ENCODE measurements at regions of chr7 and their contacts with region 1.

Region 1: DNA sequence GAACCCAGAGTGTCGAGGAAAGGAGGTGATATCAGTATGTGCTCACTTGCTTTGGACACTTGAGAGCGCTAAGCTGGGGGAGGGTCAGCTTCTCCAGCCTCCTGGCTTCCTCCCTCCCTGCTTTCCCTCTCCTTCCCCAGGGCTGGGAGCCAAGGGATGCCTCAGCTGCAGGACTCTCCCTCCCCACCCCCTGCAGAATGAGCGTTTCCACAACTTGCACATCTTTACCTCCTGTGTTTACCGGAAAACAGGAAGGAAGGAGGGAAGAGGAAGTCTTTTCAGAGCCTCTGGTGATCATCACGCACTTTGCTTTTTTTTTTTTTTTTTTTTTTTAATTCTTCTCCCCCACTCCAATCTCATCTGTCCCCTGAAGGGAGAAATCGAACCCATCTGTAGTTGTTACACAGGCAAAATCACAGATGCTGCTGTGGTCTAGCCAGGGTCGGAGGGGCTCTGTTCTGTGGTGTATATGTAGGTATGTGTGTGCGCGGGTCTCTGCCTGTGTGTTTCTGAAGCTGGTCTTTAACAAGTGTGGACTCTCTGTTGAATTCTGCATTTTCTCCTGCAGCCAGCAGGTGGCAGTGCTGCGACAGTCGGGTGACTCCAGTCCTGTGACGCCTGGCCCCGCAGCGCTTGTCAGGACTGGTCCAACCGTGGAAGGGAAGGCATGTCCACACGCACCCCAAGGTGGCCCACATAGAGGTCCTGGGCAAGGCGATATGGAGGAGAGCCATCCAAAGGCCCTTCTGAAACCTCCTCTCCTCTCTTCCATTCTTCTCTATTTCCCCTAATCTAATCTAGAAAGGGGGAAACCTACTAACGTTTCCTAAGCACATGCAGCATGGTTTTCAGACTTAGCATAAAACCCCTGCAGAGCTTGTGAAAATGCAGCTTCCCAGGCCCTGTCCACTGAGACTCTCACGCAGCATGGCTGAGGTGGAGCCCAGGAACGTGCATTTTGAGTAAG is 257.6 kb downstream of the PLXNA4 start:
- DNase-seq: no peak
- H3K4me3 ChIP-seq: no peak overlapping the region
- H3K27ac ChIP-seq: no peak overlapping the region
- H3K4me1 ChIP-seq: peaks cover 7% of the 10 kb centered on the region
- H3K27me3 ChIP-seq: peaks cover 3% of the 10 kb centered on the region
- CTCF ChIP-seq: peak; percentile 89 to 92 (median 90)
- POLR2A ChIP-seq: no peak

Region 2: GRCh38 chr7:132307465-132307864 is 11.2 kb before region 1 on chr7:
- intact Hi-C with region 1: no loop called
- DNase-seq: no peak
- H3K4me3 ChIP-seq: no peak overlapping the region
- H3K27ac ChIP-seq: no peak overlapping the region
- H3K4me1 ChIP-seq: no peaks in the 10 kb centered on the region
- H3K27me3 ChIP-seq: no peaks in the 10 kb centered on the region
- CTCF ChIP-seq: no peak
- POLR2A ChIP-seq: no peak

Region 3: GRCh38 chr7:132402751-132403245 is 84.2 kb after region 1 on chr7:
- intact Hi-C with region 1: no loop called
- DNase-seq: no peak
- H3K4me3 ChIP-seq: no peak overlapping the region
- H3K27ac ChIP-seq: no peak overlapping the region
- H3K4me1 ChIP-seq: peaks cover 15% of the 10 kb centered on the region
- H3K27me3 ChIP-seq: no peaks in the 10 kb centered on the region
- CTCF ChIP-seq: no peak
- POLR2A ChIP-seq: no peak

Region 4: GRCh38 chr7:132455378-132455777 is 136.7 kb after region 1 on chr7:
- intact Hi-C with region 1: no loop called
- DNase-seq: no peak
- H3K4me3 ChIP-seq: no peak overlapping the region
- H3K27ac ChIP-seq: no peak overlapping the region
- H3K4me1 ChIP-seq: no peaks in the 10 kb centered on the region
- H3K27me3 ChIP-seq: no peaks in the 10 kb centered on the region
- CTCF ChIP-seq: no peak
- POLR2A ChIP-seq: no peak

Region 5: DNA sequence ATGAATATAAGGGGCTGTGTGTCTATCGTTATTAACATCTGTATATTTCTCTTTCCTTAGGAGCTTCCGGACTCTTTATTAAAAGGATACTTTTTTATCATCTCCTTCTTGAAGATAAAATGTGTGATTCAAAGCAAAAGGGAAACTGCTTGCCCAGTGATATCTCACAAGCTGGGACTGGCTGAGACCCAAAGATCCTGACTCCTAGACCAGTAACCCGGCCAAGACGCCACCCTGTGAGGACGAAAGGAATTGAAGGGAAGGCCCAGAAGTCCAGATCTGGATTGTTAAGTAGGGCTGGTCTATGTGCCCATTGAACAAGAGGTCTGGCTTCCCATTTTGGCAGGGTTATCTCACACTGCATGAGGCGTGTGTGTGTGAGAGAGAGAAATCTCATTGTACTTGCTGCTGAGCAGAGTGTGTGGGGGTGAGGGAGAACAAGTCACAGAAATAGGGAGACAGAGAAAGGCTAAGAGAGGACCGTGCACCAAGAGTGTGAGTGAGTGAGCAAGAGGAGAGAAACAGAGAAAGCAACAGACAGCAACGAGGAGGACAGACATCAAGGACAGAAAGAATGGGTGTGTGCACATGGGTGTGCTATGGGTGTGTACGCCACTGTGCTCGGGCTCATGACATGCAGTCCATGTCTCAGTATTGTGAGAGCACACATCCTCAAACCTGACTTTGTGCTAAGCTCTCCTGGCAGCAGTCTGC is 182.2 kb after region 1 on chr7:
- intact Hi-C with region 1: loop called (anchors 5 kb)
- DNase-seq: no peak
- H3K4me3 ChIP-seq: no peak overlapping the region
- H3K27ac ChIP-seq: no peak overlapping the region
- H3K4me1 ChIP-seq: no peaks in the 10 kb centered on the region
- H3K27me3 ChIP-seq: no peaks in the 10 kb centered on the region
- CTCF ChIP-seq: peak in 1 of 3 experiments; percentile 33
- POLR2A ChIP-seq: no peak

Region 6: DNA sequence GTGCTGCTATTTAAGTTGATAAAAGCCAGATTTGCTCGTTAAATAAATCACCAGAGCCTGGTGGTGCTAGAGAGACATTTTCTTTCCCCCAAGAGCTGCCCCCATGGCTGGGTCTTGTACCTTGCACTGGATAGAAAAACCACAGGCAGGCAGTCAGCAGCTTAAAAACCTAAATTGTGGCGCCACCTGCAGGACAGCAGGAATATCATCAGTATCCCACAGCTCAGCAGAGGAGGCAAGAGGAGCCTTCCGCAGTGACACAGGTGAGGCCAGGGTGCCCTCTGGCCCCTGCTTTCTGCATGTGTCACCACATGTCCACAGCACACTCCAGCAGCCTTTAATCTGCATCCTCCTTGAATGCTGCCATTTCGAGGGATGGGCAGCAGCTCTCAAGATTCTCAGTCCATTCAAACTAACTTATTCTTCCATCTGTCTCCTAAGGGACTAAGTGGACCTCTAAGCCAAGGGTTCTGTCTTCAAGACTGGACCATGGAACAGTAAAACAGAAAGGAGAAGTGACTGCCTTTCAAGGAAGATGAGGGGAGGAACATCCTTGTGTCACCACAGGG is 262.2 kb after region 1 on chr7:
- intact Hi-C with region 1: loop called (anchors 5 kb)
- DNase-seq: peak; percentile 77 to 88
- H3K4me3 ChIP-seq: no peak overlapping the region
- H3K27ac ChIP-seq: no peak overlapping the region
- H3K4me1 ChIP-seq: peaks cover 9% of the 10 kb centered on the region
- H3K27me3 ChIP-seq: no peaks in the 10 kb centered on the region
- CTCF ChIP-seq: peak; percentile 69 to 85 (median 77)
- POLR2A ChIP-seq: no peak

Measured in vagina (tissue), 2 donors.